Activated naive CD4-positive, alpha-beta T cell treated with anti-CD3 and anti-CD28 coated beads for 36 hours (primary cell): ENCODE measurements at regions of chr7 and their contacts with region 1.

Region 1: GRCh38 chr7:113289140-113289740 is 170.9 kb upstream of the SMIM30 start:
- DNase-seq: peak; percentile 13
- H3K4me3 Mint-ChIP-seq: no peak overlapping the region
- H3K27ac Mint-ChIP-seq: no peak overlapping the region
- H3K4me1 Mint-ChIP-seq: no peaks in the 10 kb centered on the region
- H3K27me3 Mint-ChIP-seq: peaks cover 3% of the 10 kb centered on the region

Region 2: GRCh38 chr7:113015032-113015645 is 274.1 kb before region 1 on chr7:
- CTCF ChIA-PET with region 1: no interaction called
- intact Hi-C with region 1: loop called (anchors 2 kb)
- DNase-seq: no peak
- H3K4me3 Mint-ChIP-seq: no peak overlapping the region
- H3K27ac Mint-ChIP-seq: no peak overlapping the region
- H3K4me1 Mint-ChIP-seq: no peaks in the 10 kb centered on the region
- H3K27me3 Mint-ChIP-seq: no peaks in the 10 kb centered on the region

Region 3: DNA sequence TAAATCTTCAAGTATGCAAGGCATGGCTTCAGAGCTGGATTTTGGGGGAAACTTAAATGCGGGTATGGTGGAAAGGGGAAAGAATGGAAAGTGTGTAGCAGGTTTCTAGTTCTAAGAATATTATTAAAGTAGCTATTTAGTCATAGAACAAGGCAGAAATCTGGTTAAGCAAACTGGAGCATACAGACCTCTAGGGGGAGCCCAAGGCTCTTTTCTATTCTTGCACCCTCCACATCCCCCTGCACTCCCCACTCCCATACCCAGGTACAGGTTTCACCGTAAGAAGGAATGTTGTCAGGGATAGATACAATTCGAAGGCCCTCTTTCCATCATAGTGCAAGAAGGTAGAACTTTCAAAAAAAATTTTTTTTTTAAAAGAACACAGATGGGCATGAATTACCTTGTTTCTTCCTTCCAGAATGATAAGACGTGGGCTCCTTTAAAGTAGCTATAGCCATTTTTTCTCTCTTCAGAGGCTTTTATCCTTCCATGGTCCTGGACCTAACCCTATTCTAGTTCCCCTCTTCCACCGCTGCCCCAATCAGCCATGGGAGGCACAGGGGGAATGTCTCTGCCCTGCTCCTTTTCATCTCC is 129.4 kb before region 1 on chr7:
- CTCF ChIA-PET with region 1: no interaction called
- intact Hi-C with region 1: loop called (anchors 10 kb)
- DNase-seq: peak; percentile 10
- H3K4me3 Mint-ChIP-seq: no peak overlapping the region
- H3K27ac Mint-ChIP-seq: no peak overlapping the region
- H3K4me1 Mint-ChIP-seq: no peaks in the 10 kb centered on the region
- H3K27me3 Mint-ChIP-seq: peaks cover 10% of the 10 kb centered on the region